Esophagus muscularis mucosa (tissue), 4 donors: ENCODE measurements at regions of chr6 and their contacts with region 1.

Region 1: GRCh38 chr6:130020907-130021629 is 2.7 kb downstream of the L3MBTL3 start:
- DNase-seq: peak; percentile 93
- H3K4me3 ChIP-seq: peak overlapping the region; percentile 68 to 93 (median 84)
- H3K27ac ChIP-seq: peak overlapping the region; percentile 77 to 83 (median 80)
- H3K4me1 ChIP-seq: peaks cover 0 to 10% (median 7%) of the 10 kb centered on the region in 4 donors
- H3K27me3 ChIP-seq: no peaks in the 10 kb centered on the region
- CTCF ChIP-seq: peak; percentile 74 to 83 (median 82)
- EP300 ChIP-seq: no peak
- POLR2A ChIP-seq: no peak

Region 2: DNA sequence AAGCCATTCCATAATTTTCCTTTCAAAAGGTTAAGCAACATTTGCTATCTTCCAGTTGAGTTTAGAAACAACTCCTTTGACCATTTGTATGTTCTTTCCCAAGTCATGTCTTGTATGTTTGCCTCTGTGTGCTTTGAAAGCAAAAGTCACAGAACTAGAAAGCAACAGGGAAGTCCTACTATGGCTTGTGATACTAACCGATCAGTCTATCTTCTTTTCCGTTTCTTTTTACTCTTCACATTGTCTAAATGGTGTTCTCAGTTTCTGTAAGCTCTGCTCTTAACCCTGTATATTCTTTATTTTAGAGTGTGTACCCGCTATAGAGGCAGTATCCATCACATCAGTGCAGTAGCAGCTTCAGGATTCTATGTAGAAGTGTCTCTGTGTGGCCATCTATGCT is 192.8 kb before region 1 on chr6:
- intact Hi-C with region 1: no loop called
- DNase-seq: no peak
- H3K4me3 ChIP-seq: no peak overlapping the region
- H3K27ac ChIP-seq: no peak overlapping the region
- H3K4me1 ChIP-seq: no peaks in the 10 kb centered on the region
- H3K27me3 ChIP-seq: no peaks in the 10 kb centered on the region
- CTCF ChIP-seq: no peak
- EP300 ChIP-seq: no peak
- POLR2A ChIP-seq: no peak

Region 3: GRCh38 chr6:129893640-129894039 is 127.4 kb before region 1 on chr6:
- intact Hi-C with region 1: loop called (anchors 5 kb)
- DNase-seq: no peak
- H3K4me3 ChIP-seq: no peak overlapping the region
- H3K27ac ChIP-seq: no peak overlapping the region
- H3K4me1 ChIP-seq: no peaks in the 10 kb centered on the region
- H3K27me3 ChIP-seq: no peaks in the 10 kb centered on the region
- CTCF ChIP-seq: peak in 2 of 3 experiments; percentile 21 to 23
- EP300 ChIP-seq: no peak
- POLR2A ChIP-seq: no peak

Region 4: DNA sequence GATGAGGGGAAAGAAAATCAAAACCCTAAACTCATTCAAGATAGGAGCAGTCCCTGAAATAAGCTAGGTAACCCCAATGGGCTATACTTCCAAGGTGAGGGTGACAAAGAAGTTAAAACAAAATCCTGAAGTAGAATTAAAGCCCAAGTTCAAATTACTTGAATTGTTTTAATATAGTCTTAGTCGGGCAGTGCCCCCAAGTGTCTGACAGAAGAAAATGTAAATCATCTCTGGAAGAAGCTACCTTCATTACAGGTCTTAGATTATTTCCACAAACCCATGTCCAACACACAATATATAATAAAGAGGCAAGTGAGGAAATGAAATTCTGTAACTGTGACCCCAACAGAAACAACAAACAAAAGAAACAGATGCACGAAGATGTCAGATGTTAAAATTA is 39.5 kb before region 1 on chr6:
- intact Hi-C with region 1: no loop called
- DNase-seq: no peak
- H3K4me3 ChIP-seq: no peak overlapping the region
- H3K27ac ChIP-seq: no peak overlapping the region
- H3K4me1 ChIP-seq: no peaks in the 10 kb centered on the region
- H3K27me3 ChIP-seq: no peaks in the 10 kb centered on the region
- CTCF ChIP-seq: no peak
- EP300 ChIP-seq: no peak
- POLR2A ChIP-seq: no peak

Region 5: DNA sequence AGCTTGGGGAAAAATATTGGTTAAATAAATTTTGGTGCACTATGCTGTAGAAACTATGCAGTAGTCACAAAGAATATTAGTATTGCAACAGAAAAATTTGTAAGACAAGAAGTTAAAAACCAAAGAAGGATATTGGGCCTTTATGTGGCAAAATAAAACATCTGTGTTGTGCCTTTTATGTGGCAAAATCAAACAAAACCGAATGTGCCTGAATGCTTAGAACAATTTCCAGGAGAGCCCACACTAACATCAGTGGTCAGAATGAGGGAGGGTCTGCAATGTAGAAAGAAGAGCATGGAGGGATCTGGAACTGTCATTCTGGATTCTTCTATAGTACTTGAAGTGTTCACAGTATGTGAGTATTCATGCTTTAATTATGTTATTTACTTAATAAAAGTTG is 72.5 kb after region 1 on chr6:
- intact Hi-C with region 1: no loop called
- DNase-seq: no peak
- H3K4me3 ChIP-seq: no peak overlapping the region
- H3K27ac ChIP-seq: no peak overlapping the region
- H3K4me1 ChIP-seq: no peaks in the 10 kb centered on the region
- H3K27me3 ChIP-seq: no peaks in the 10 kb centered on the region
- CTCF ChIP-seq: no peak
- EP300 ChIP-seq: no peak
- POLR2A ChIP-seq: no peak

Region 6: DNA sequence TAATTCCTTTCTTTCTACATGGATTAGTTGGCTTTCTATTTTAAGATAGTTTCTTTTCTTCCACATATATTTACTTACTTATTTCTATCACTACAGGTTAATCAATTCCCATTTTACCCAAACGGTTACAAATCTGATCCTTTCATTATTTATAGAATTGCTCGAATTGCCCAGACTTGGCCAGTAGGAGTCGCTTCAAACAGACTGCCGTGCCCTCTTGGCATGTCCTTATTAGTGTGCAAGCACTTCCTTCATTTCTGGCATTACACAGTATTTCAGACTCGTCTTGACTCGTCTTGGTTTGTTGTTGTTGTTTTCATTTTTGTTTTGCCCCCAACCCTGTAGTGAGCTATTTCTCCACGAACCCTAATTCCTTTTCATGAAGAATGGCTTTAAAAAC is 127.1 kb after region 1 on chr6:
- intact Hi-C with region 1: no loop called
- DNase-seq: no peak
- H3K4me3 ChIP-seq: no peak overlapping the region
- H3K27ac ChIP-seq: no peak overlapping the region
- H3K4me1 ChIP-seq: no peaks in the 10 kb centered on the region
- H3K27me3 ChIP-seq: no peaks in the 10 kb centered on the region
- CTCF ChIP-seq: no peak
- EP300 ChIP-seq: no peak
- POLR2A ChIP-seq: no peak